ENCODE measurements at regions of chr11 and their contacts with region 1.

Region 1: GRCh38 chr11:133834682-133835592 is 10.4 kb downstream of the SPATA19 start:
- DNase-seq: peak; percentile 47
- ATAC-seq: peak; percentile 91
- H3K4me3 ChIP-seq: no peak overlapping the region
- H3K27ac ChIP-seq: no peak overlapping the region
- H3K4me1 ChIP-seq: peaks cover 0 to 6% of the 10 kb centered on the region in 2 experiments; a peak in 1 of 4 replicates
- H3K27me3 ChIP-seq: no peaks in the 10 kb centered on the region
- CTCF ChIP-seq: peak; percentile 61 to 73 (median 65)
- POLR2A ChIP-seq: no peak
- RAD21 ChIP-seq: peak; percentile 83

Region 2: DNA sequence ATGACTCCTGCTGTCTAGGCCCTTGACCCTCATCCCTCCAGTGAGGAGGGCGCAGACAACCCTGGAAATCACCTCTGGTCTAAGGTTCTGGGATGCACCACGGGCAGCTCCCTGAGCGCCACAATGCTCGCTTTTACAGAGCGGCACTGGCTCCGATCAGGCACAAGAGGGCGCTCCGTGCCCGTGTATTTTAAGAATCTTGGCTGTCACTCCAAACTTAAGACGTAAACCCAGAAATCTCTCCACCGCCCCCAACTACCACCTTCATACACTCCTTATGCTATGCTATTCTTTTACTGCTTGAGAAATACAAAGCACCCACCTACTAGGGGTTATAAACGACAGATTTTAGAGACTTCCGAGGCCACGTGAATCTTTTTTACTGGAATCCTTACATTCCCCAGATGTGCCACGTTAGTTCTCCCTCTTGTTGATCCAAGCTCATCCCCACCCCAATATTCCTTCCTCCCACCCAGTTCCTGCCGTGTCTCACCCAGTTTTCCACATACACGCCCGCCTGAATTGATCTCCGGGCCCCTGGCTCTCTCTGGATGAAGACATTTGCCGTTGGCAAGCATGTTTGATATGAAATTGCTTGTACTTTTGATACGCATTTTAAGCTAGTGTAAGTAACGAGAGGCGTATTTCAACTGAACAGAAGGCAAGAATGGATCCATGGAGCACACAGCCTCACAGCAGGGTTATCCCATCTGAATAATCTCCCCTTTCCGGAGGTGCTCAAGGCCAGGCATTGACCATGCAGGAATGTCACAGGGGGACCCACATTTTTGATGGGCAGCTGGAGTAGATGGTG is 756.1 kb before region 1 on chr11:
- CTCF ChIA-PET with region 1: interaction called, 20 read pairs
- POLR2A ChIA-PET with region 1: no interaction called
- RAD21 ChIA-PET with region 1: interaction called in 1 of 2 experiments, 5 read pairs
- intact Hi-C with region 1: loop called (anchors 1 kb)
- DNase-seq: no peak
- ATAC-seq: peak; percentile 67
- H3K4me3 ChIP-seq: no peak overlapping the region
- H3K27ac ChIP-seq: no peak overlapping the region
- H3K4me1 ChIP-seq: no peaks in the 10 kb centered on the region
- H3K27me3 ChIP-seq: no peaks in the 10 kb centered on the region
- CTCF ChIP-seq: peak; percentile 16 to 58 (median 56); a peak in 4 of 6 replicates
- POLR2A ChIP-seq: no peak
- RAD21 ChIP-seq: peak; percentile 60

Region 3: GRCh38 chr11:133134314-133135173 is 700.4 kb before region 1 on chr11:
- CTCF ChIA-PET with region 1: interaction called, 7 read pairs
- POLR2A ChIA-PET with region 1: no interaction called
- RAD21 ChIA-PET with region 1: interaction called in 1 of 2 experiments, 3 read pairs
- intact Hi-C with region 1: loop called (anchors 2 kb)
- DNase-seq: no peak
- ATAC-seq: peak; percentile 61; the same call in 1 of the 2 replicates
- H3K4me3 ChIP-seq: no peak overlapping the region
- H3K27ac ChIP-seq: no peak overlapping the region
- H3K4me1 ChIP-seq: no peaks in the 10 kb centered on the region
- H3K27me3 ChIP-seq: no peaks in the 10 kb centered on the region
- CTCF ChIP-seq: peak; percentile 13 to 67 (median 56); a peak in 4 of 6 replicates
- POLR2A ChIP-seq: no peak
- RAD21 ChIP-seq: peak; percentile 32

Region 4: GRCh38 chr11:133712051-133712560 is 122.8 kb before region 1 on chr11:
- CTCF ChIA-PET with region 1: no interaction called
- POLR2A ChIA-PET with region 1: no interaction called
- RAD21 ChIA-PET with region 1: no interaction called
- intact Hi-C with region 1: no loop called
- DNase-seq: no peak
- ATAC-seq: no peak
- H3K4me3 ChIP-seq: no peak overlapping the region
- H3K27ac ChIP-seq: no peak overlapping the region
- H3K4me1 ChIP-seq: no peaks in the 10 kb centered on the region
- H3K27me3 ChIP-seq: no peaks in the 10 kb centered on the region
- CTCF ChIP-seq: no peak
- POLR2A ChIP-seq: no peak
- RAD21 ChIP-seq: no peak

Region 5: DNA sequence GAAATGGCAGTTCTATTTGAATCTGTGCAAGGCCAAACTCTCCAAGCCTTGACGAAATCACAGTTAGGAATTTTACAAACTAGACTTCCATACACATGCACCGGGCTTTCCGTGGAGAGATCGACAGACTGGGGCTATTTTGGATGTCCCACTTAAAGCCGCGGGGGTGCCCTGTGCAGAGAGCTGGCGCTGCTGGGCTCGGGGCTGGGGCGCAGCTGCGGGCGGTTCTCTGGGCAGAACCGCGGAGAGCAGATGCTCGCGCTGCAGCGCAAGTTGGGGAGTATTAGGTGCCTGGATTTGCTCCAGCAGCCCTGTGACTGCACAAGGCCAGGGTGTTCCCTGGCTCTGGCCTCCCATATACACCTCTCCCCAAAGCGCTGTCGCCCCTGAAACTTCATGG is 56.8 kb before region 1 on chr11:
- CTCF ChIA-PET with region 1: no interaction called
- POLR2A ChIA-PET with region 1: no interaction called
- RAD21 ChIA-PET with region 1: no interaction called
- intact Hi-C with region 1: no loop called
- DNase-seq: no peak
- ATAC-seq: no peak
- H3K4me3 ChIP-seq: no peak overlapping the region
- H3K27ac ChIP-seq: no peak overlapping the region
- H3K4me1 ChIP-seq: no peaks in the 10 kb centered on the region
- H3K27me3 ChIP-seq: no peaks in the 10 kb centered on the region
- CTCF ChIP-seq: no peak
- POLR2A ChIP-seq: no peak
- RAD21 ChIP-seq: no peak

Region 6: DNA sequence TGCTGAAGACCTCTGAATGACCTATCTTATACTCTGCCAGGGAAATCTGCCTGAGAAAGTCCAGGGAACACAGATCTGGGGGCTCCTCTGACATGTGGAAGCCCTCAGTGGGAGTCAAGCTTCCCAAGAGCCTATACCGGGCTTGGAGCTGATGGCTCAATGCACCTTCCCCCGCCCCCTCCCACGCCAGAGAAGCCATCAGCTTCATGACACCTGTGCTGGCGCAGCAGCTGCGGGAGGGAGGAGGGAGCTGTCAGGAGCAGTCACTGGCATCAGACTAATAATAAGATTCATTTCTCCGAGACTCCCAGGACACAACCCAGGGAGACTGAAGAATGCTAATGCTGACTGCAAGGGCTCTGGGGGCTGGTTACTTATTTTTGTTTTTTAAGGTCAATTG is 37.4 kb before region 1 on chr11:
- CTCF ChIA-PET with region 1: no interaction called
- POLR2A ChIA-PET with region 1: no interaction called
- RAD21 ChIA-PET with region 1: no interaction called
- intact Hi-C with region 1: no loop called
- DNase-seq: no peak
- ATAC-seq: no peak
- H3K4me3 ChIP-seq: no peak overlapping the region
- H3K27ac ChIP-seq: no peak overlapping the region
- H3K4me1 ChIP-seq: no peaks in the 10 kb centered on the region
- H3K27me3 ChIP-seq: peaks cover 3% of the 10 kb centered on the region
- CTCF ChIP-seq: no peak
- POLR2A ChIP-seq: no peak
- RAD21 ChIP-seq: no peak